CD4-positive, alpha-beta memory T cell (primary cell): ENCODE measurements at regions of chr19 and their contacts with region 1.

Region 1: DNA sequence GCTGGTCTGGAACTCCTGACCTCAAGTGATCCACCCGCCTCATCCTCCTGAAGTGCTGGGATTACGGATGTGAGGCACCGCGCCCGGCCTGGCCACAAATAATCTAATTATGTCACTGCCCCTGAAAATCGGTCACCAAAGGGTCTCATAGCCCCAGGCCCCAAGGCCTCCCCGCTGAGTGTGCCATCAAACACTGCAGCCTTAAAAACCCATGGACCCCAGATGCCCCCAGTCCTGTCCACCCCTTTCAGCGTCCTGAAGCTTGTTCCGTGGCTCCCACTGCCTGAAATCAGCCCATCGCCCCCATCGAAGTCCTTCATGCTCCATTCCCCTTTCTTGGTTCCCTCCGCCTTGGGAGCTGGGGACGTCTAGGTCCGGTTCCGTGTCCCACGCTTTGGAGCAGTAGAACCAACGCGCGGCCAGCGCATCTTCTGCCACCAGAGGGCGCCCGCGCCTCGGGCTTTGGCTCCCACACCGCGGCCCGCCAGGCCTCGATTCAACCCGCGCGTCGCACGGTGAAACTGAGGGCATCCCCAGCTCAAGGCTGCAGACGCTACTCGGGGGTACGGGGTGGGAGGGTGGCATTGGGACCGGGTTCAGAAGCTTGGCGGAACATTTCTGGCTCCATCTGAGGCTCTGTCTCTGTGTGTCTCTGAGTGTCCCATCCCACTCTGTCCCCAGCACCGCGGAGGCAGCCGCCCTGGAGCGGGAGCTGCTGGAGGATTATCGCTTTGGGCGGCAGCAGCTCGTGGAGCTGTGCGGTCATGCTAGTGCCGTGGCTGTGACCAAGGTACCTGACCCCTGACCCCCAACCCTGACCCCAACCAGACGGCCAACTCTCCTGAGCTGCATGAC is 3.5 kb downstream of the YJEFN3 start:
- DNase-seq: peak; percentile 78 to 85 (median 80)
- H3K4me3 ChIP-seq: no peak overlapping the region
- H3K4me3 Mint-ChIP-seq: peak overlapping the region in 1 of 8 donors; percentile 20
- H3K27ac ChIP-seq: peak overlapping the region; percentile 24
- H3K27ac Mint-ChIP-seq: peak overlapping the region in 6 of 7 donors; percentile 64 to 91 (median 86)
- H3K4me1 ChIP-seq: peaks cover 12% of the 10 kb centered on the region
- H3K4me1 Mint-ChIP-seq: peaks cover 3 to 28% (median 13%) of the 10 kb centered on the region in 4 donors
- H3K27me3 ChIP-seq: no peaks in the 10 kb centered on the region
- H3K27me3 Mint-ChIP-seq: no peaks in the 10 kb centered on the region

Region 2: DNA sequence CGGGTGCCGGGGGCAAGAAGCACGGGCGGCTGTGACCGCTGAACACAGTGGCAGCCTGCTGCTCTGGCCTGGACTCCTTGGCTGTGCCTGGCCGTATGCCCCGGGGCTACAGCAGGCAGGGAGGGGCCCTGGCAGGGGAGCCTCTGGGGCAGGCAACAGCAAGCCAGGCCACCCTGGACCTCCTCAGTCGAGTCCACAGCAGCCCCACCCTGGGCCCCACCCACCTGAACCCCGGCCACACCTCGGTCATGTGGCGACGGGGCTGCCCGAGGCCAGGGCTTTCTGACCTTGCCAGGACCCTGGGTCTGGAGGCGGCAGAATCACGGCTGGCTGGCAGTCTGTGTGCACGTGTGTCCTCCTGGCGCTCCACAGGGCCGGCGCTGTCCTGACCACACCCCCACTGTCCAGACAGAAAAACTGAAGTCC is 14.6 kb after region 1 on chr19:
- CTCF ChIA-PET with region 1: interaction called, 10 read pairs
- POLR2A ChIA-PET with region 1: no interaction called
- intact Hi-C with region 1: no loop called
- DNase-seq: peak in 1 of 5 donors; percentile 13
- H3K4me3 ChIP-seq: no peak overlapping the region
- H3K4me3 Mint-ChIP-seq: no peak overlapping the region
- H3K27ac ChIP-seq: no peak overlapping the region
- H3K27ac Mint-ChIP-seq: peak overlapping the region in 1 of 7 donors; percentile 42
- H3K4me1 ChIP-seq: peaks cover 4% of the 10 kb centered on the region
- H3K4me1 Mint-ChIP-seq: peaks cover 0 to 5% (median 3%) of the 10 kb centered on the region in 4 donors
- H3K27me3 ChIP-seq: no peaks in the 10 kb centered on the region
- H3K27me3 Mint-ChIP-seq: peaks cover 0 to 3% of the 10 kb centered on the region in 2 donors

Region 3: DNA sequence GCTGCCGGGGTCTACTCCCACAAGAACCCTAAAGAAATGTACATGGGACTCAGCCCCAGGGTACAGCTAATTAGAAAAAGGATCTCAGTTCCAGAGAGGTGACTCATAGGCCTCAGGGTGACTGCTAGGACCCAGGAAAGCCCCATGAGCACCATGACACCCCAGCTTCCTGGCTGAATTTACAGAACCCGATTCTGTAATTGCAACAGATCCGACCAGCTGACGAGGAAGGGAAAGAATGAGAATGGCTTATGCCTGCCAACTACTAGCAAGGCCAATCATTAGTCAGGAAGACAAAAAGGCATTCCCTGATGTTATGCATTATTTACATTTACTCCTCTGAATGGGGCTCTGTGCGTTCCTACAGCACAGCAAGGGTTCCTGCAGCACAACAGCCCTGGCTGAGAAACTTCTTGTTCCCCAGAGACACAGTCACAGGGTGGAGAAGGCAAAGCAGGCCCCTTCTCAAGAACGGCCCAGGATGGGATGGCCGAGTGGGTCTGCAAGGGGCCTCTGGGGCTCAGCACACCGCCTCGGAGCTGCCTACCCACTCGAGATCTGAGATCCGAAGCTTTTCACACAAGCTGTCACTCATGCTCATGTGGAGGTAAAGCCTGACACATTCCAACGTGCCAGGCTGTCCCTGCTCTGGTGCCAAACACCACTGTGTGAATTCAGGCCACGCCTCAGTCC is 59.1 kb after region 1 on chr19:
- CTCF ChIA-PET with region 1: interaction called, 10 read pairs
- POLR2A ChIA-PET with region 1: interaction called, 3 read pairs
- intact Hi-C with region 1: no loop called
- DNase-seq: peak; percentile 63 to 96 (median 69)
- H3K4me3 ChIP-seq: no peak overlapping the region
- H3K4me3 Mint-ChIP-seq: peak overlapping the region in 7 of 8 donors; percentile 28 to 88 (median 62)
- H3K27ac ChIP-seq: peak overlapping the region; percentile 90
- H3K27ac Mint-ChIP-seq: peak overlapping the region; percentile 92 to 98 (median 96)
- H3K4me1 ChIP-seq: peaks cover 71% of the 10 kb centered on the region
- H3K4me1 Mint-ChIP-seq: peaks cover 30 to 74% (median 52%) of the 10 kb centered on the region in 4 donors
- H3K27me3 ChIP-seq: no peaks in the 10 kb centered on the region
- H3K27me3 Mint-ChIP-seq: no peaks in the 10 kb centered on the region

Region 4: GRCh38 chr19:19657397-19657783 is 125.2 kb after region 1 on chr19:
- CTCF ChIA-PET with region 1: interaction called, 12 read pairs
- POLR2A ChIA-PET with region 1: interaction called, 13 read pairs
- intact Hi-C with region 1: no loop called
- DNase-seq: no peak
- H3K4me3 ChIP-seq: no peak overlapping the region
- H3K4me3 Mint-ChIP-seq: no peak overlapping the region
- H3K27ac ChIP-seq: no peak overlapping the region
- H3K27ac Mint-ChIP-seq: peak overlapping the region in 2 of 7 donors; percentile 22 to 42
- H3K4me1 ChIP-seq: peaks cover 25% of the 10 kb centered on the region
- H3K4me1 Mint-ChIP-seq: peaks cover 15 to 31% (median 18%) of the 10 kb centered on the region in 4 donors
- H3K27me3 ChIP-seq: no peaks in the 10 kb centered on the region
- H3K27me3 Mint-ChIP-seq: no peaks in the 10 kb centered on the region

Region 5: DNA sequence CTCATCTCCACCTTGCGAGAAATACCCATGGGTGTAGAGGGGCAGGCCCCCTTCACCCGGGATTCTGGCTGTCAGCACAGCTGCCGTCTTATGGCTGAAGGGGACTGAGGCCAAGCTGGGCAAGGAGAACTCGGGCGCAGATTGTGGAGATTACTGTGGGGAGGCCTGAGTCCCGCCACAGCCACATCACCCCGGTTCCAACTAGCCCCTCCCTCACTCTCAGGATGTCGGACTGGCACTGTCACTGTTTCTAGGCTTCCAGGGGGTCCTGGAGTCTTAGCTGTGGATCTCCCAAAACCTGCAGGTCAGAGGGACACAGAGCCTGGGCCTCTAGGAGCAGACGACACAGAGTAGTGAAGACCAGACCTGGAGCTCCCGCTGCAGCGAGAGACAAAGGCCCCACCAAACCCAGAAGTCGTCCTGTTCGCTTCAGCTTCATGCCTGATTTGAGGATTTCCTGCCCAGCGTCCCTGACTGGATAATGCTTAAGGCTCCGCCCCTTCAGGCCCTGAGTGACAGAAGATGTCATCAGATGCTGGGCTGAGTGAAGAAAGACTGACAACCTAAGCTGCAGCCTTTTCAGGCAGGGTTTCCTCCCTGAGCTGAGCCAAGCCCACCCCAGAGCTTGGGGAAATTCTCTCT is 424.4 kb after region 1 on chr19:
- CTCF ChIA-PET with region 1: interaction called, 50 read pairs
- POLR2A ChIA-PET with region 1: no interaction called
- intact Hi-C with region 1: loop called (anchors 1 kb)
- DNase-seq: no peak
- H3K4me3 ChIP-seq: no peak overlapping the region
- H3K4me3 Mint-ChIP-seq: no peak overlapping the region
- H3K27ac ChIP-seq: no peak overlapping the region
- H3K27ac Mint-ChIP-seq: no peak overlapping the region
- H3K4me1 ChIP-seq: no peaks in the 10 kb centered on the region
- H3K4me1 Mint-ChIP-seq: peaks cover 0 to 7% (median 3%) of the 10 kb centered on the region in 4 donors
- H3K27me3 ChIP-seq: no peaks in the 10 kb centered on the region
- H3K27me3 Mint-ChIP-seq: no peaks in the 10 kb centered on the region